MCF 10A (cell line): ENCODE measurements at regions of chr18 and their contacts with region 1.

Region 1: GRCh38 chr18:58223717-58224424 is 179.8 kb downstream of the NEDD4L start:
- DNase-seq: peak; percentile 96
- H3K4me3 Mint-ChIP-seq: peak overlapping the region; percentile 84
- H3K27ac Mint-ChIP-seq: peak overlapping the region; percentile 98
- H3K4me1 Mint-ChIP-seq: peaks cover 27% of the 10 kb centered on the region
- H3K27me3 Mint-ChIP-seq: no peaks in the 10 kb centered on the region
- CTCF ChIP-seq: no peak

Region 2: GRCh38 chr18:58135701-58136331 is 88.1 kb before region 1 on chr18:
- CTCF ChIA-PET with region 1: interaction called, 5 read pairs
- POLR2A ChIA-PET with region 1: interaction called, 3 read pairs
- intact Hi-C with region 1: loop called (anchors 5 kb)
- DNase-seq: peak; percentile 85
- H3K4me3 Mint-ChIP-seq: no peak overlapping the region
- H3K27ac Mint-ChIP-seq: no peak overlapping the region
- H3K4me1 Mint-ChIP-seq: peaks cover 3% of the 10 kb centered on the region
- H3K27me3 Mint-ChIP-seq: no peaks in the 10 kb centered on the region
- CTCF ChIP-seq: peak; percentile 64

Region 3: DNA sequence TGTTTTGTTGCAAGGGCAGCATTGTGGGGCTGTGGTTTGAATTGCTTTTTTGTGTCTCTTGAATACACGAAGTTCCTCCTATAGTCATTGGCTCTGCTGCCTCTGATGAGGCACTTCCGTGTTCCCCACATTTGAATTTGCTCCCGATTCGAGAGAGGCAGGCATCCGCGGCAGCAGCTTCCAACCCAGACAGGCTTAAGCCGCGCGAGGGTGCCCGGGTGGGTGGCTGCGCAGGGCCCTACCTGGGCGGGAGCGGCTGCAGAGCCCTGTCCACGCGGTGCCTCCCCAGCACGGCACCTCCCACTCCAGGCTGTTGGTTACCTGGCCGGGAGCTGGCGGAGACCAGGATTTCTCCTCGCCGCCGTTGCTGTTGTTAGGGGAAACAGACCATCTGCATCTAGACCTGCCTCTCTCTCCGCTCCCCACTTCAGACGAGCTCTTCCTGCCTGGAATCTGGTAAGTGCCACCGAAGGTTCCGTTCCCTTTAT is 28.5 kb before region 1 on chr18:
- CTCF ChIA-PET with region 1: interaction called, 4 read pairs
- POLR2A ChIA-PET with region 1: interaction called, 43 read pairs
- intact Hi-C with region 1: no loop called
- DNase-seq: peak; percentile 38
- H3K4me3 Mint-ChIP-seq: peak overlapping the region; percentile 75
- H3K27ac Mint-ChIP-seq: peak overlapping the region; percentile 32
- H3K4me1 Mint-ChIP-seq: peaks cover 23% of the 10 kb centered on the region
- H3K27me3 Mint-ChIP-seq: no peaks in the 10 kb centered on the region
- CTCF ChIP-seq: no peak

Region 4: GRCh38 chr18:58276789-58277739 is 53.2 kb after region 1 on chr18:
- CTCF ChIA-PET with region 1: no interaction called
- POLR2A ChIA-PET with region 1: interaction called, 166 read pairs
- intact Hi-C with region 1: no loop called
- DNase-seq: peak; percentile 44
- H3K4me3 Mint-ChIP-seq: no peak overlapping the region
- H3K27ac Mint-ChIP-seq: peak overlapping the region; percentile 53
- H3K4me1 Mint-ChIP-seq: peaks cover 28% of the 10 kb centered on the region
- H3K27me3 Mint-ChIP-seq: no peaks in the 10 kb centered on the region
- CTCF ChIP-seq: no peak

Region 5: GRCh38 chr18:58308463-58308862 is 84.6 kb after region 1 on chr18:
- CTCF ChIA-PET with region 1: no interaction called
- POLR2A ChIA-PET with region 1: interaction called, 145 read pairs
- intact Hi-C with region 1: no loop called
- DNase-seq: no peak
- H3K4me3 Mint-ChIP-seq: no peak overlapping the region
- H3K27ac Mint-ChIP-seq: no peak overlapping the region
- H3K4me1 Mint-ChIP-seq: peaks cover 21% of the 10 kb centered on the region
- H3K27me3 Mint-ChIP-seq: no peaks in the 10 kb centered on the region
- CTCF ChIP-seq: no peak

Region 6: GRCh38 chr18:58378411-58379379 is 154.8 kb after region 1 on chr18:
- CTCF ChIA-PET with region 1: no interaction called
- POLR2A ChIA-PET with region 1: no interaction called
- intact Hi-C with region 1: no loop called
- DNase-seq: no peak
- H3K4me3 Mint-ChIP-seq: no peak overlapping the region
- H3K27ac Mint-ChIP-seq: no peak overlapping the region
- H3K4me1 Mint-ChIP-seq: no peaks in the 10 kb centered on the region
- H3K27me3 Mint-ChIP-seq: no peaks in the 10 kb centered on the region
- CTCF ChIP-seq: no peak